ENCODE measurements at regions of chr1 and their contacts with region 1.

Region 1: DNA sequence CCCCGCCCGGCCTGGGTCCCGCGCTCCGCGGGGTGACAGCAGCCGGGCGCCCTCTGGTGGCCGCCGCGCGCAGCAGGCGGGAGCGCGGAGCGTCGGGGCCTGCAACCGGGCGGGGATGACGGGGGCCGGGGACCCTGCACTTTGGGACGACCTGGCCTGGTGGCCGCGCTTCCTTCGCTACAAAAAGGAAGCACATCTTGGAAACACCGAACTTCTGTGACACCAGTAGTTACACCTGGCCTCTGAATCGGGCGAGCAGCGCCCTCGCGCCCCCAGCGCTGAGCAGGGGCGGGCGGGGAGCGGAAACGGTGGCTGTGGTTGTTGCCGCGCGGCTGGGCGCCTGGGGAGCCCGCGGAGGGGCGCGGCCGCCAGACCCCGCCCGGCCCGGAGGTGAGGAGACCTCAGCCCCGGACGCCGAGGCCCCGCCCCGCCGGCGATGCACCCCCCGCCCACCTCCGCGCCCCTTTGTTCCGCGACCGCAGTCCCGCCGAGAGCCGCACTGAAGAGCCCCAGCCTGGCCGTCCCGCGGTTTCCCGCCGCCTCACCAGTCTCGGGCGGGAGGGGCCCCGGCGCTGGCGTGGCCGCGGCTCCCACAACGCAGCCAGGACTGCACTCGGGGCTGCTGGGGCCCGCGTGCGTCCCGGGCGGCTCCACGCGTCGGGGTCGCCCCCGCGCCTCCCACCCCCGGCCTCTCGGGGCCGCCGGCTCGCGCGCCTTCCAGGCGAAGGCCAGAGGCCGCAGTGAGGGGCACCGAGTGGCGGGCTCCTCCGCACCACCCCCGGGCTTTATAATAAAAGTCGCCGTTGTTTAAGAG is 59.3 kb downstream of the H3-3A start:
- DNase-seq: peak; percentile 69 to 82 (median 80)
- H3K4me3 ChIP-seq: peak overlapping the region; percentile 80
- H3K27ac ChIP-seq: peak overlapping the region; percentile 39 to 71
- H3K4me1 ChIP-seq: no peaks in the 10 kb centered on the region
- H3K27me3 ChIP-seq: no peaks in the 10 kb centered on the region
- CTCF ChIP-seq: peak; percentile 47 to 95 (median 93)
- EP300 ChIP-seq: no peak
- POLR2A ChIP-seq: peak; percentile 18

Region 2: DNA sequence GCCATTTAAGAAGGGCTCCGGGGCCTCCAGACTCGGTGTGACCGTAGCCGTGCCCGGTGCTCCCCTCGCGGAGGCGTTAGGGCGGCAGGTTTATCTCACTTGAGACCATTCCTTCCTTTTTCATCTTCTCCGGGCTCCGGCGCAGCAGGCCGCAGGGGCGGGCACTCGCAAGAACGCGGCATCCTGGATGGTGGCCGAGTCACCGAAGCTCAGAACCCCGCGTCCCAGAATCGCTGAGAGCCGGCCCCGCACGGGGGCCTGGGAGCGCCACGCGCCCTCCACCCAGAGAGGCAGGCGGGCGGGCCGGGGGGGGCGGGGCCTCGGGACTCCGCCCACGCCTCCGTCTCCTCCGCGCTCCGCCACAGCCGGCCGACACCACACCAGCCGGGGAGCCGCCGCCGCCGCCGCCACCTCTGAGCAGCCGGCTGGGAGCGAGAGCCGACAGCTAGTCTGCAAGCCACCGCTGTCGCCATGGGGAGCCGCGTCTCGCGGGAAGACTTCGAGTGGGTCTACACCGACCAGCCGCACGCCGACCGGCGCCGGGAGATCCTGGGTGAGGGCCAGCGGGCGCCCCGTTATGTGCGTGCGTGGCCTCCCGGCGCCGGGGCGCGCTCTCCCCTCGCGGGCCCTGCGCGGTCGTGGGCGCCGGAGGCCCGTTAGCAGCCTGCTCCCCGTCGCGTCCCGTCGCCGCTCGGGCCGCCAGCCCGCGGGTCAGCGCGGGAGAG is 1938.8 kb before region 1 on chr1 and contains the start of gene DEGS1:
- intact Hi-C with region 1: loop called in 1 of 4 experiments (anchors 5 kb)
- DNase-seq: peak; percentile 76 to 85 (median 82)
- H3K4me3 ChIP-seq: peak within 1 kb of the TSS; percentile 70
- H3K27ac ChIP-seq: peak within 1 kb of the TSS; percentile 79 to 95
- H3K4me1 ChIP-seq: peaks cover 4% of the 10 kb centered on the region
- H3K27me3 ChIP-seq: no peaks in the 10 kb centered on the region
- CTCF ChIP-seq: no peak
- EP300 ChIP-seq: no peak
- POLR2A ChIP-seq: peak; percentile 85
- total RNA-seq, gene DEGS1: 37.9 to 61.3 (median 47.3) TPM

Region 3: DNA sequence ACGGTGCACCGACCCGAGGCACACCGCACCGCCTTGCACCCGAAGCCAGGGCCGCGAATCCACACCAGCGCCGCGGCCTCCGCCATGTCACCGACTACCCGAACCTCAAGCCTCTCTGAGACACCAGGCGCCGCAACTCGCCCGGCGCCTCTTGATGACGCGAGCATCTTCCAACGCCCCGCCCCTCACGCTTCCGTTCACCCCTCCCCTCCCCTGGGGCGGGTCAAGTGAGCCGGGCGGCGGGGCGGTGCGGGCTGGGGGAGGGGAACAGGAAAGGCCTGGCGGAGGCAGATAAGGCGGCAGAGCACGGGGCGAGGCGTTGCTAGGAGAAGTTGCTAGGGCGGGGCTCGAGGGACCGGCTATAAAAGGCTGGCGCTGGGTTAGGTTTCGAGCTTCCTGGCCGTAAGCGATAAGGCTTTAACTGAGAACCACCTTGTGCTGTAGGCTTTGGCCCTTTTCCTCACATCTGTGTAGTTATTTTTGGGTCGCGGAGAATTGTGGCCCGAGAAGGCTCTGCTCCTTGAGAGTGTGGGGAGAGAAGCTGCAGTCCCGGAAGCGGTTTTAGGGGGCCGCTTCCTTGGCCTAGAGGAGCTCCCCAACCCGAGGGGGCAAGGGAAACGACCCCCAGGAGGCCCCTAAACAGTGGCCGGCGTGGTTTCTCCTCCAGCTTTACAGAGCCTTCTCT is 122.4 kb before region 1 on chr1 and contains the start of gene SDE2:
- intact Hi-C with region 1: loop called in 1 of 4 experiments (anchors 5 kb)
- DNase-seq: peak; percentile 100
- H3K4me3 ChIP-seq: peak within 1 kb of the TSS; percentile 86
- H3K27ac ChIP-seq: peak within 1 kb of the TSS; percentile 40 to 91
- H3K4me1 ChIP-seq: peaks cover 2% of the 10 kb centered on the region
- H3K27me3 ChIP-seq: no peaks in the 10 kb centered on the region
- CTCF ChIP-seq: peak in 1 of 3 donors; percentile 27
- EP300 ChIP-seq: peak; percentile 81
- POLR2A ChIP-seq: peak; percentile 91
- total RNA-seq, gene SDE2: 16.0 to 24.4 (median 18.3) TPM

Region 4: DNA sequence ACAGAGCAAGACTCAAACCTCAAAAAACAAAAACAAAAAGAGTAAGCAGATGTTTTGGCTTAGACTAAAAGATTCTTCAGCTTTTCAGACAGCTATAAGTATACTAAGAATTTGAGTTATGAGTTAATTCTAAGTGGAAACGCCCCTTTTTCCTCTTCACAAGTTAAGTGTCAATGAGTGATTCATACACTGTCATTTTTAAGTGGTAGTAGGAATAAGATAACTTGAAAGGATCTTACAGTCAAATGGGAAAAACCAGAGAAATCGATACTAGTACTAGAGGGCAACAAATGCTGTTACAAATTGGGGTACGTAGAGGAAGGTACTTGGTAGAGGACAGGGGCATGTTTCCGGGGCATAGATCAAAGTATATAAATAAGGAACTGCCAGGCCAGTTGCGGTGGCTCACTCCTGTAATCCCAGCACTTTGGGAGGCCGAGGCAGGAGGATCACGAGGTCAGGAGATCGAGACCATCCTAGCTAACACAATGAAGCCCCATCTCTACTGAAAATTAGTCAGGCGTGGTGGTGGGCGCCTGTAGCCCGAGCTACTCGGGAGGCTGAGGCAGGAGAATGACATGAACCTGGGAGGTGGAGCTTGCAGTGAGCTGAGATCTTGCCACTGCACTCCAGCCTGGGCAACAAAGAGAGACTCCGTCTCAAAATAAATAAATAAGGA is 51.8 kb before region 1 on chr1:
- intact Hi-C with region 1: loop called in 3 of 4 experiments (anchors 2 to 5 kb)
- DNase-seq: no peak
- H3K4me3 ChIP-seq: no peak overlapping the region
- H3K27ac ChIP-seq: no peak overlapping the region
- H3K4me1 ChIP-seq: peaks cover 3% of the 10 kb centered on the region
- H3K27me3 ChIP-seq: no peaks in the 10 kb centered on the region
- CTCF ChIP-seq: no peak
- EP300 ChIP-seq: no peak
- POLR2A ChIP-seq: no peak

Region 5: DNA sequence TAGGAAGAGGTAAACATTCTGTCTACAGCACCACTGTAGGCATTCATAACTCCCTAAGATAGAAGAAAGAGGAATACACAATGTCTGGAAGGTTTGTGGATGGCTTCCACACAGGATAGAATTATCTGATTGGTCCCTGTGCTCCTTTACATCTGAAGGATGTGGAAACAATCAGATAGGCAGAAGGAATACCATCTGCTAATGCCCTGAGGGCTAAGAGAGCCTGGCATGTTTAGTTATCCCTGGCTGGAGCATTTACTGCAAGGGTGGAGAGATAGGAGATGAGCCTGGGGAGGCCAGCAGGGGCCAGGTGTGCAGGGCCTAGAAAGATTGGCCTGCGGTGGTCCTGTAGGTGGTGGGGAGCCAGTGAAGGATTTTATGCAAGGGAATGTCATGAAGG is 73.3 kb after region 1 on chr1:
- intact Hi-C with region 1: loop called (anchors 5 kb)
- DNase-seq: no peak
- H3K4me3 ChIP-seq: no peak overlapping the region
- H3K27ac ChIP-seq: no peak overlapping the region
- H3K4me1 ChIP-seq: no peaks in the 10 kb centered on the region
- H3K27me3 ChIP-seq: no peaks in the 10 kb centered on the region
- CTCF ChIP-seq: no peak
- EP300 ChIP-seq: no peak
- POLR2A ChIP-seq: no peak

Region 6: DNA sequence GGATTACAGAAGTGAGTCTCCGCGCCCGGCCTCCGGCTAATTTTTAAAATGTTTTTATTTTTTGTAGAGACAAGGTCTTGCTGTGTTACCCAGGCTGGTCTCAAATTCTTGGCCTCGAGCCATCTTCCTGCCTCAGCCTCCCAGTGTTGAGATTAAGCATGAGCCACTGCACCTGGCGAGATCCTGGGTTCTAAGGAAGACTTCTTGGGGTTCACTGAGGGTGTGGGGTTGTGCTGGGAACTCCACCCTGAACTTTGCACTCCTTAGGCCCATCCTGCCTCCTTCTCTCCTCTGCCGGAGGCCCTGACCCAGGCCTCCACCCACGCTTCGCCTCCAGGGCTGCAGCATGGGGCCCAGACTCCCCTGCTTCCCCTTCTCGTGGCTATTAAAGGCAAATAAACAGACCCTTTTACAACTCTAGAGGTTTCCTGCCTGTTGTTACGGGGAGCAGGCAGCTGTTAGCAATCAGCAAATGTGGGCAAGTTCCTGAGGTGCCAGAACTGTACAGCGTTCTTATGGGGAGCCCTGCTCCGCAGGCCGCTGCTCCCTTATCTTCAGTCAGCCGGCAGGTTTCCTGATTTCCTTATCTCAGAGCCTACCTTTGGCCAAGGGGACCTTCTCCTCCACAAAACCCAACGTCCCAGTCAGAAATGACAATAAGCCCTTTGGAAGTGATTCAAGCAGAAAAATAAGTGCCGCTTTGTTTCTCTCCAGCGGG is 228.2 kb after region 1 on chr1:
- intact Hi-C with region 1: loop called in 1 of 4 experiments (anchors 10 kb)
- DNase-seq: peak; percentile 43 to 74 (median 62)
- H3K4me3 ChIP-seq: no peak overlapping the region
- H3K27ac ChIP-seq: peak overlapping the region; percentile 36 to 59
- H3K4me1 ChIP-seq: peaks cover 6% of the 10 kb centered on the region
- H3K27me3 ChIP-seq: no peaks in the 10 kb centered on the region
- CTCF ChIP-seq: no peak
- EP300 ChIP-seq: no peak
- POLR2A ChIP-seq: no peak

Measured in ovary (tissue), 10 donors.